Esophagus muscularis mucosa (tissue), 4 donors: ENCODE measurements at regions of chr4 and their contacts with region 1.

Region 1: DNA sequence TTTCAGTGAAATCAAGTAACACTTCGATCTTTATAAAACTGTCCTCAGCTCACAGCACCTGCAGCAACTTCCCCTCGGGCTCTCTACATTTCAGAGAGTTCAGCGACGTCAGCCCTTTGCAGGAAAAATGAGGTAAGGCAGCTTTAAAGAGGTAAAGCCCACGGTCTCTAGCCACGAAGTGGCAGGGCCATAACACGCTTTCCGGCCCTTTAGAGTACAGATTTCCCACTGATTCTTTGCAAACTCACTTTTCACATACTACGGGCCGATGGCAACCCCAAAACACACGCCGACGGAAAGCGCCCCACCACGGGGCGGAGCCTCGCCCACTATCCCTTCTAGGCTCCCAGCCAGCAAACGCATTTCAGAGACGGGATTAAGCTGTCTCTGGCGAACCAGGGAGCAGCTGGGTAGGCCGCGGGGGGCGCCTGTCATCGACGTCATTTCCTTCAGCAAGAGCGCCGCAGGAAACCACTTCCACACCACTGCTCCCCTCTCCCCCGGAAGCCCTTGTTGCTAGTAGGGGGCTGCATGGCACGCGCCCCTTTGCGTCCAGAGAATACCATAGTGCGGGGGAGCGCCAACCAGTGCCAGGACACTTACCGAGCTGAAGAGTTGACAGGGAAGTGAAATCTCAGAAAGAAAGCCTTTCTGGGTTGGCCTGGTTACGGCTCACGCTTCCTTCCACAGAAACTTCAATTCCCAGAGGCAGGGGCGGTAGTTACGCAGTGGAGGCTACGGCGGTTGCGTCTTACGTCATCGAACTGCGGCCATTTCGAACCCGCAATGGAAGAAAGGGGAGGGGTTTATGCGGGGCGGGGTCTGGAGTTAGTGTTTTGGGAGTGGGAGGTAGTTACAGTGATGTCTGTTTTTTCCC is at the start of gene TRMT10A:
- DNase-seq: peak; percentile 99
- H3K4me3 ChIP-seq: peak within 1 kb of the TSS; percentile 61 to 81 (median 71)
- H3K27ac ChIP-seq: peak within 1 kb of the TSS; percentile 91 to 94 (median 92)
- H3K4me1 ChIP-seq: peaks cover 8 to 18% (median 10%) of the 10 kb centered on the region in 4 donors
- H3K27me3 ChIP-seq: no peaks in the 10 kb centered on the region
- CTCF ChIP-seq: peak in 1 of 3 experiments; percentile 5
- EP300 ChIP-seq: no peak
- POLR2A ChIP-seq: peak; percentile 43
- total RNA-seq, gene TRMT10A: 3.0 to 5.3 (median 4.8) TPM

Region 2: GRCh38 chr4:99723612-99724011 is 160.1 kb after region 1 on chr4:
- intact Hi-C with region 1: loop called (anchors 2 kb)
- DNase-seq: no peak
- H3K4me3 ChIP-seq: no peak overlapping the region
- H3K27ac ChIP-seq: peak overlapping the region; percentile 79 to 83 (median 81)
- H3K4me1 ChIP-seq: peaks cover 23 to 54% (median 46%) of the 10 kb centered on the region in 4 donors
- H3K27me3 ChIP-seq: no peaks in the 10 kb centered on the region
- CTCF ChIP-seq: no peak
- EP300 ChIP-seq: no peak
- POLR2A ChIP-seq: no peak

Region 3: GRCh38 chr4:99885063-99885664 is 321.6 kb after region 1 on chr4:
- intact Hi-C with region 1: loop called (anchors 5 kb)
- DNase-seq: no peak
- H3K4me3 ChIP-seq: no peak overlapping the region
- H3K27ac ChIP-seq: peak overlapping the region in 1 of 4 donors; percentile 13
- H3K4me1 ChIP-seq: peaks cover 12 to 31% (median 28%) of the 10 kb centered on the region in 4 donors
- H3K27me3 ChIP-seq: no peaks in the 10 kb centered on the region
- CTCF ChIP-seq: peak; percentile 53 to 67 (median 62)
- EP300 ChIP-seq: no peak
- POLR2A ChIP-seq: no peak